ENCODE measurements at regions of chr14 and their contacts with region 1.

Region 1: DNA sequence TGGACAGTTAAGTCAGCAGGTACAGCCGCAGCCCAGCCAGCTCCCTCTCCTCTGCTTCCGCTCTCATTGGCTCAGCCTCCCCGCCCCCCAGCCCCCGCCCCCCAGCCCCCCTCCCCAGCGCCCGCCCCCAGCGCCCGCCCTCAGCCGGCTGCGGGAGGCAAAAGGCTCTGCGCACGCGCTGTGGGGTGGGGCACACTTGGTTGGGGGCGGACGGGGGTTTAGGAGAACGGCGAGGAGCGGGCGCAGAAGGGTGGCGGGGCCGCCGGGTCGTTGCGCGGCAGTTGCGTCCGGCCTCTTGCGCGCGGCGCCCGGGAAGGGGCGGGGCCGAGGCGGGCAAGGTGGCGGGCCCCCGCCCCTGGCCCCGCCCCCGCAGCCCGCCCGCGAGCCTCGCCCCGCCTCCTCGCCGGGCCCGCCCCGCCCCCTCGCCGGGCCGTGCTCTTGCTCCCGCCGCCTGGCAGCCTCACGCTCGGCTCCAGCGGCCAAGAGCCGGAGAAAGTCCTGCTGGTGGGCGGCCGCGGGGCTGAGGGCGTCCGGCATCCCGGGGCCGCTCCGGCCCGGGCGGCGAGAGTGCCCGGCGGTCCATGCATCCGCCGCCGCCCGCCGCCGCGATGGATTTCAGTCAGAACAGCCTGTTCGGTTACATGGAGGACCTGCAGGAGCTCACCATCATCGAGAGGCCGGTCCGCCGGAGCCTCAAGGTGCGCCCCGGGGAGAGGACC is at the start of gene PPP4R4:
- DNase-seq: peak; percentile 85 to 93 (median 87)
- H3K4me3 ChIP-seq: peak within 1 kb of the TSS in 1 of 2 donors; percentile 60
- H3K4me3 Mint-ChIP-seq: peak within 1 kb of the TSS; percentile 83 to 91 (median 88)
- H3K27ac ChIP-seq: peak within 1 kb of the TSS; percentile 37
- H3K27ac Mint-ChIP-seq: peak within 1 kb of the TSS; percentile 63 to 91 (median 86)
- H3K4me1 ChIP-seq: peaks cover 6% of the 10 kb centered on the region
- H3K4me1 Mint-ChIP-seq: peaks cover 16 to 28% (median 21%) of the 10 kb centered on the region in 4 donors
- H3K27me3 ChIP-seq: peaks cover 3% of the 10 kb centered on the region
- H3K27me3 Mint-ChIP-seq: peaks cover 0 to 7% of the 10 kb centered on the region in 2 donors
- total RNA-seq, gene PPP4R4: 6.3 to 7.3 TPM

Region 2: DNA sequence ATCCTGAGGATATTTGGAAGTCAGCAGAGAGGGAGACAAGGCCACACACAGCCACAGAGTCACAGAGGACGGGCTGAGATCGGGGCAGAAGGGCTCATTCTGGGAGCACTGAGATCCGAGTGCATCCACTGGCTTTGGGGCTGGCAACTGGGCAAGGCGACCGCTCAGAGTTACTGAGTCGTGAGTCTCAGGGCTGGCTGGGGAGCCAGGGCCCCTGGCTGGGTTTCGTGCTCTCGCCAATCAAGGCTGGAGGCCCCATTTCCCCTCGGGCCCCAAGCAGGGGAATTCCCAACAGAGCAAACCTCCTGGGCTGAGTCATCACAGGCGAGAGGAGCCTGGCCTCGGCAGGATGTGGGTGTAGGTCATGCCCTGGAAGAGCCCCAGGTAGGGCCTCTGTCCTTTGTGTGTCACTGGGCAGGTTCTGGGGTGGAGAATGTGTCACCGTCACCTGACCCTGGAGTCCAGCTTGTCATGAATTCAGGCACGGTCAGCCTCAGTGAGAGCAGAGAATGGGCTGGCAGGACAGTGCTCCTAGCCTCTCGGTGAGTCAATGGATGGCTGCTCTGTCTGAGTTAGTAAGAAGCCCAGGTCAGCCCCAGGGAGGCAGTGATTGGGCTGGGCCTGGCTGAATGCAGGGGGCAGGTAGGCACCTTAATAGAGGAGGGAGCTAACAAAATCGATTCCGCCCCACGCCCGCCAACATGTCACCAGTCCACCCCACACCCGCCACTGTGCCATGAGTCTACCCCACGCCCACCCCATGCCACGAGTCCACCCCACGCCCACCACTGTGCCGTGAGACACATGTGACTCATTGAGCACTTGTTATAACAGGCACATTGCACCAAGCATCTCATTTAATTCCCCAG is 214.6 kb before region 1 on chr14:
- CTCF ChIA-PET with region 1: no interaction called
- POLR2A ChIA-PET with region 1: interaction called, 3 read pairs
- intact Hi-C with region 1: loop called (anchors 2 kb)
- DNase-seq: peak; percentile 89 to 99 (median 91)
- H3K4me3 ChIP-seq: peak overlapping the region; percentile 18 to 21
- H3K4me3 Mint-ChIP-seq: peak overlapping the region; percentile 75 to 89 (median 82)
- H3K27ac ChIP-seq: peak overlapping the region; percentile 77
- H3K27ac Mint-ChIP-seq: peak overlapping the region; percentile 96 to 100 (median 99)
- H3K4me1 ChIP-seq: peaks cover 100% of the 10 kb centered on the region
- H3K4me1 Mint-ChIP-seq: peaks cover 80 to 100% (median 93%) of the 10 kb centered on the region in 4 donors
- H3K27me3 ChIP-seq: no peaks in the 10 kb centered on the region
- H3K27me3 Mint-ChIP-seq: no peaks in the 10 kb centered on the region

Region 3: DNA sequence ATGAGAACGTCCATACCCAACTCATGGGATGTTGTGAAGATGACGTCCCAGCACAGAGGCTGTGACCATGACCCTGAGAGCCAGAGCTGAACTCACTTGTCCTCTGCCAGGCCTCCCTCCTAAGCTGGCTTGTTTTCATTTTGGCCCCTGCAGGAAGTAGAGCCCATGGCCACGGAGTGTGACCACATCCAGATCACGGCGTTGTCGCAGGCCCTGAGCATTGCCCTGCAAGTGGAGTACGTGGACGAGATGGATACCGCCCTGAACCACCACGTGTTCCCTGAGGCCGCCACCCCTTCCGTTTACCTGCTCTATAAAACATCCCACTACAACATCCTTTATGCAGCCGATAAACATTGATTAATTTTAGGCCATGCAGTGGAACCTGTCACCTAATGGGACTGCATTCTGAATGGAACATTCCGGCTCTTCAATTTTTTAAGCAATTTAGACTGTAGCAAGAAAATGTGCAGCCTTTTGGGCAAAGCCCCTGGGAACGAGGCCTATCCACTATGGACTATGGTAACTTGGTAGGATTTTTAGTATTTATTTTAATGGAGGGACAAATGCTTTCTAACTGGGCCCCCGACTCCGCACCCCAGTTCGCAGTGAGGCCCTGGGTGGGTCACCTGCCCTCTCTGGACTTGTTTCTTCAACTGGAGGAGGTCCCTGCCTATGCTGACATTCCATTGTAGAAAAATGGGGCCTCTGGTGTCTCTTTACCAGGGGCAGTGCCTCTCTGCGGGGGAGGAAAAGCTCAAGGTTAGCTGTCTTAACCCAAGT is 128.3 kb before region 1 on chr14:
- CTCF ChIA-PET with region 1: no interaction called
- POLR2A ChIA-PET with region 1: no interaction called
- intact Hi-C with region 1: no loop called
- DNase-seq: no peak
- H3K4me3 ChIP-seq: no peak overlapping the region
- H3K4me3 Mint-ChIP-seq: peak overlapping the region in 1 of 8 donors; percentile 7
- H3K27ac ChIP-seq: no peak overlapping the region
- H3K27ac Mint-ChIP-seq: peak overlapping the region in 4 of 7 donors; percentile 11 to 72 (median 42)
- H3K4me1 ChIP-seq: no peaks in the 10 kb centered on the region
- H3K4me1 Mint-ChIP-seq: peaks cover 0 to 5% (median under 1%) of the 10 kb centered on the region in 4 donors
- H3K27me3 ChIP-seq: no peaks in the 10 kb centered on the region
- H3K27me3 Mint-ChIP-seq: no peaks in the 10 kb centered on the region

Region 4: DNA sequence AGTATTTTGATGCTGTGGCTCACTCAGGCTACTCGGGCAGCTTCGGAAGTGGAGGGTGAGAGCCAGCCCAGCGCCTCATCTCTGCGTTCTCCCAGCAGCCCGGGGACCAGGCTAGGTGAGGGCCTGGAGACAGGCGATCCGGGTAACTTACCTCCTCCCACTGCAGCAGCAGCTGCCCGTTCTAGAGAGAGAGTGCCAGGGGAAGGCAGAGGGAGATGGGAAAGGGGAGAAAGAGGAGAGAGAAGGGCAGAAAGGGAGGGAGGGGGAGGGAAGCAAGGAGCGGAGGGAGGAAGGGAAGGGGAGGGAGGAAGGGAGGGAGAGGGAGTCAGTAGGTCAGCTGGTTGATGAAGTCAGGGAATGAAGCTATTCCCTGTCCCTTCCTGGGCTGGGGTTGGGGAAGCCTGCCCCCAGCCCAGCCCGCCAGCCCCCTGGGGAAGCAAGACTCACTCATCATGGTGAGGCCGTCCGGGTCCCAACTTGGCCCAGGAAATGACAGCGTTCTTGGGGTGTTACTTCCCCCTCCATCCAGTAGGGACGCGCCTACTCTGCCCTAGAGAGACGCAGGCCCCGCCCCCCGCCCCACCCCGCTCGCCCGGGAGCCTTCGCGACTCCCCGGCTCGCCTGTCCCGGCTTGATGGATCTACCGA is 44.8 kb before region 1 on chr14 and contains the start of gene IFI27L2:
- CTCF ChIA-PET with region 1: interaction called, 126 read pairs
- POLR2A ChIA-PET with region 1: interaction called, 12 read pairs
- intact Hi-C with region 1: no loop called
- DNase-seq: peak; percentile 34 to 80 (median 46)
- H3K4me3 ChIP-seq: peak within 1 kb of the TSS; percentile 50 to 82
- H3K4me3 Mint-ChIP-seq: peak within 1 kb of the TSS; percentile 86 to 93 (median 90)
- H3K27ac ChIP-seq: peak within 1 kb of the TSS; percentile 46
- H3K27ac Mint-ChIP-seq: peak within 1 kb of the TSS; percentile 77 to 88 (median 84)
- H3K4me1 ChIP-seq: peaks cover 18% of the 10 kb centered on the region
- H3K4me1 Mint-ChIP-seq: peaks cover 12 to 25% (median 20%) of the 10 kb centered on the region in 4 donors
- H3K27me3 ChIP-seq: no peaks in the 10 kb centered on the region
- H3K27me3 Mint-ChIP-seq: no peaks in the 10 kb centered on the region
- total RNA-seq, gene IFI27L2: 34.0 to 38.2 TPM

Region 5: GRCh38 chr14:94193776-94194175 is 19.7 kb after region 1 on chr14:
- CTCF ChIA-PET with region 1: no interaction called
- POLR2A ChIA-PET with region 1: no interaction called
- intact Hi-C with region 1: no loop called
- DNase-seq: no peak
- H3K4me3 ChIP-seq: no peak overlapping the region
- H3K4me3 Mint-ChIP-seq: no peak overlapping the region
- H3K27ac ChIP-seq: no peak overlapping the region
- H3K27ac Mint-ChIP-seq: no peak overlapping the region
- H3K4me1 ChIP-seq: no peaks in the 10 kb centered on the region
- H3K4me1 Mint-ChIP-seq: no peaks in the 10 kb centered on the region
- H3K27me3 ChIP-seq: no peaks in the 10 kb centered on the region
- H3K27me3 Mint-ChIP-seq: peaks cover 5% of the 10 kb centered on the region in 2 donors

Measured in CD4-positive, alpha-beta memory T cell (primary cell).